A673 (cell line): ENCODE measurements at regions of chr4 and their contacts with region 1.

Region 1: DNA sequence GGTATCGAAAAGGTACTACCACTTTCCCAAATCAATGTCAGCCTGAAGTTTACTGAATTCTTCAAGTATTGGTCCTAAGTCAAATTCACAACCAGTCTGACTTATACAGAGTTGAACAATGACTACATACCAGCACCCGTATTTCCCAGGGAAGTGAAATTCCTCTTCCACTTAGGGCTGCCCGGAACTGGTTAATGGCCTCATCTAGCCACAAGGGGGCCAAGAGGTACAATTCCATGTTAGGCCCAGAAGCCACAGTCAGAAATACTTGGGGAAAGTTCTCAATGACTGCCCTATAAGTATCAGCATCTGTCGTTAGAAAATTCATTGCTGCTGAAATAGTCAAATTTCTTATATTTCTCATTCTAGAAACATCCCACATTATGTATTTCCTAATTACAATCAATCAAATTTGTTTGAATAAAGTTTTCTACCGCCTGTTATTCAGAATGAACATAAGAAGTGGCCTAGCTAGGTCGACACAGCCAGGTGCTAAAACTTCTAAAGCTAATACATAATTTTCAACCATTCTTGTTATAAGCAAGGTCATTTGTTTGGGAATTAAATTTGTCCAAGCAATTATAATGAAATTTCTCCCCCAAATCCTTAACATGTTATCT is 5.7 kb upstream of the PCDH7 start:
- DNase-seq: peak; percentile 89
- H3K4me3 ChIP-seq: no peak overlapping the region
- H3K27ac ChIP-seq: peak overlapping the region; percentile 85
- H3K4me1 ChIP-seq: peaks cover 25% of the 10 kb centered on the region
- H3K27me3 ChIP-seq: no peaks in the 10 kb centered on the region
- CTCF ChIP-seq: peak; percentile 86

Region 2: GRCh38 chr4:30605616-30606190 is 108.8 kb before region 1 on chr4:
- CTCF ChIA-PET with region 1: interaction called, 3 read pairs
- POLR2A ChIA-PET with region 1: interaction called, 3 read pairs
- intact Hi-C with region 1: loop called (anchors 1 kb)
- DNase-seq: peak; percentile 90
- H3K4me3 ChIP-seq: no peak overlapping the region
- H3K27ac ChIP-seq: peak overlapping the region; percentile 97
- H3K4me1 ChIP-seq: peaks cover 33% of the 10 kb centered on the region
- H3K27me3 ChIP-seq: no peaks in the 10 kb centered on the region
- CTCF ChIP-seq: no peak

Region 3: GRCh38 chr4:31016322-31017061 is 302.0 kb after region 1 on chr4:
- CTCF ChIA-PET with region 1: no interaction called
- POLR2A ChIA-PET with region 1: no interaction called
- intact Hi-C with region 1: loop called (anchors 2 kb)
- DNase-seq: peak; percentile 33
- H3K4me3 ChIP-seq: no peak overlapping the region
- H3K27ac ChIP-seq: no peak overlapping the region
- H3K4me1 ChIP-seq: peaks cover 73% of the 10 kb centered on the region
- H3K27me3 ChIP-seq: no peaks in the 10 kb centered on the region
- CTCF ChIP-seq: peak; percentile 40; the same call in 1 of the 2 replicates

Region 4: GRCh38 chr4:31370866-31371465 is 656.4 kb after region 1 on chr4:
- CTCF ChIA-PET with region 1: no interaction called
- POLR2A ChIA-PET with region 1: no interaction called
- intact Hi-C with region 1: loop called (anchors 10 kb)
- DNase-seq: peak; percentile 79
- H3K4me3 ChIP-seq: no peak overlapping the region
- H3K27ac ChIP-seq: no peak overlapping the region
- H3K4me1 ChIP-seq: peaks cover 6% of the 10 kb centered on the region
- H3K27me3 ChIP-seq: no peaks in the 10 kb centered on the region
- CTCF ChIP-seq: peak; percentile 84

Region 5: DNA sequence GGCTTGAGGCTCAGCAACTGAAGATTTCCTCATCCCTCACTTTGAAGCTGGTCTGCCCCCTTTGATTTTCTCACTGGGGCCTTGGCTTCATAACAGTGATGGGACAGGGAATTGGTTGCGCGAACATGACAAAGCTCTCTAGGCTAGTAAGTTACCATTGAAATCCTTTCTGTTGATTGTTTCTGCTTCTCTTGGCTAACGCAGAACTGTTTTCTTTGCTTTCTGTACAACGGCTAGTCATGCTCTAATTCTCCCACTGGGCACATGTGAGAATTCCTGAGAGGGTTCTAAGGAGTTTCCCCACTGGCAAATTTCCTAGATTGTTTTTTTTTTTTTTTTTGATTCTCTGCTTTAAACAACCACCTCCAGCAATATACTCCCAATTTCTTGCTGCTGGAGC is 744.3 kb after region 1 on chr4:
- CTCF ChIA-PET with region 1: no interaction called
- POLR2A ChIA-PET with region 1: no interaction called
- intact Hi-C with region 1: no loop called
- DNase-seq: no peak
- H3K4me3 ChIP-seq: no peak overlapping the region
- H3K27ac ChIP-seq: no peak overlapping the region
- H3K4me1 ChIP-seq: no peaks in the 10 kb centered on the region
- H3K27me3 ChIP-seq: no peaks in the 10 kb centered on the region
- CTCF ChIP-seq: no peak